IMR-90 (cell line): ENCODE measurements at regions of chr2 and their contacts with region 1.

Region 1: GRCh38 chr2:28506112-28506910 is 10.5 kb downstream of the PLB1 start:
- DNase-seq: peak; percentile 18
- ATAC-seq: peak; percentile 35; the same call in 1 of the 2 replicates
- H3K4me3 ChIP-seq: no peak overlapping the region
- H3K27ac ChIP-seq: no peak overlapping the region
- H3K4me1 ChIP-seq: no peaks in the 10 kb centered on the region
- H3K27me3 ChIP-seq: peaks cover 44% of the 10 kb centered on the region
- CTCF ChIP-seq: no peak
- POLR2A ChIP-seq: no peak
- RAD21 ChIP-seq: no peak

Region 2: DNA sequence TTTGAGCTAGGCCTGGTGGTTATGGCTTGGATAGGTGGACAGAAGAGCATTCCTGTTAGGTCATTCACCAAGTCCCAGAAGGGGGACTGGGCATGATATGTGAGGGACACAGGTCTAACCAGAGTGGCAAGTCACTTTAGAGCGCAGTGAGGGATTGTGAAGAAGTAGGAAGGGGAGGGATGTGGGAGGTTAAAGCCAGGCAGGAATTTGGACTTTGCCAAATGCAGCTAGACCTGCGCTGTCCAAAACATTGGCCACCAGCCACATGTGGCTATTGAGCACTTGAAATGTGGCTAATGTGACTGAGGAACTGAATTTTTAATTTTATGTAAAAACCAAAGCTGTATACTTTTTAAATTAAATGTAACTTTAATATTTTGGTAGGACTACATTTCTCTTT is 986.0 kb before region 1 on chr2:
- CTCF ChIA-PET with region 1: no interaction called
- POLR2A ChIA-PET with region 1: interaction called, 15 read pairs
- dilution Hi-C with region 1: no loop called
- in situ Hi-C with region 1: no loop called
- intact Hi-C with region 1: no loop called
- DNase-seq: no peak
- ATAC-seq: no peak
- H3K4me3 ChIP-seq: no peak overlapping the region
- H3K27ac ChIP-seq: no peak overlapping the region
- H3K4me1 ChIP-seq: no peaks in the 10 kb centered on the region
- H3K27me3 ChIP-seq: peaks cover 28% of the 10 kb centered on the region
- CTCF ChIP-seq: no peak
- POLR2A ChIP-seq: no peak
- RAD21 ChIP-seq: no peak